Sciatic nerve (tissue), 2 donors: ENCODE measurements at regions of chr10 and their contacts with region 1.

Region 1: GRCh38 chr10:114694752-114695151 is 36.7 kb upstream of the ABLIM1 start:
- DNase-seq: no peak
- ATAC-seq: no peak

Region 2: DNA sequence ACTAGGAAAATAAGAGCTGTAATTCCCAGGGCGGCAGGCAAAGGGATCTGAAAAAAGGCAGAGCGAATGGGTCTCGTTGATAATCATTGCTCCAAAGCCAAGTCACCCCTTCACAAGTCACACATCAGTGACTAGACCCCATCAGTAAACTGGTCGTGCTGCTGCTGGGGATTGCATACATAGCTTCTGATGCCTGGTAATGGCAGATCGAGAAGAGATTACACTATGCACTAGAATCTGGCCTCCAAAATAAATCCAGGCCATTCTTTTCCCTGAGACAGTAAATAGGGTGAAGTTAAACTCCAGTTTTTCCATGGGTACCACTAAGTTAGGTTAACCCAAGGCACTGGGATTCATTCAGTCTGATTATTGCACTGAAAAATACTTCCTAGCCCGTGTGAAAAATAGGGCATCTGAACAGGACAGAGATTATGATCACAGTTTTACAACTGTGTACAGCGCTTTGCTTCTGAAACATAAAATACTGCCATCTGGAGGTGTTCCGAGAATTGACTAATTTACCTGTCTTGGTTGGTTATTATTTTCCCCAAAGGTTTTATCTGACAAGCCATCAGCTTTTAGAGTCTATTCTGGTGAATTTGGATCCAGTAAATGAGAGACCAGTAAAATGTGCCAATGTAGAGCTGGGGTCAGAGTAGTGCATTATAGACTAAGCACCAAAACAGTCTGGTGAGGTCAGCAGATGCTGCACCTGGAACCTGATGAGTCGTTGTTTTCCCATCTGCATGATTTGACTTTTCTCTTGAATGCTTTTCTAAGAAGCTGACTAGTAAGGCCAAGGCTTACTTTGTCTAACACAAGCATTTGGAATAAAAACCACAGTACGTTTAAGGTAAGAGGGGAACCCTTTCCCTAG is 207.6 kb before region 1 on chr10:
- intact Hi-C with region 1: loop called (anchors 10 kb)
- DNase-seq: no peak
- ATAC-seq: no peak